ENCODE measurements at regions of chr12 and their contacts with region 1.

Region 1: GRCh38 chr12:102484428-102484958 is 4.1 kb upstream of the IGF1 start:
- DNase-seq: no peak

Region 2: DNA sequence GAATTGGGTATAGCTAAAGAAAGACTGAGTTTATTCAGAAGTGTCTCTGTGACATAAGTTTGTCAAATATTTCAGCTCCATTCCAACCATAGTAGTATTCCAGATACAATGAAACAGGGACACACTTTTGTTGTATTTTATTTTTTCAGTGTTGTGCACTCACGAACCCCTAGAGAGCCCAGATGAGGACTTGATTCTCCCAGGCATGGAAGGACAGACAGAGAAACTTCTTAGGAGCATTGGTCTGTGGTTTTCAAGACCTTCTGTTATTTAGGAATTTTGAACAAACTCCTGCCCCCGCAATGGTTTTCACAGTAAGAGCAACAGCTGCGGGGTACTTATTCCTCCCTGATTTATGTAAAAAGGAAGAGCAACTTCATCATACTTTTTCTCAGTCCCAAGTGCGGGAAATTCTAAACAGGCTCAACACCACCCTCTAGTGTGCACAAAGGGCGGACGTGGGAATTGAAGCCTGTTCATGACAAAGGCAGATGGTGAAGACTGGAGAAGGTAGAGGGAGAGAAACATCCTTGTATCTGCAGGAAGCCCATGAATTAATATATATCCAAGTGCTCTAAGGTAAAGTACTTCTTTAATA is 284.9 kb after region 1 on chr12:
- intact Hi-C with region 1: loop called (anchors 10 kb)
- DNase-seq: no peak